Right ventricle myocardium inferior (tissue), 1 donor: ENCODE measurements at regions of chr10 and their contacts with region 1.

Region 1: DNA sequence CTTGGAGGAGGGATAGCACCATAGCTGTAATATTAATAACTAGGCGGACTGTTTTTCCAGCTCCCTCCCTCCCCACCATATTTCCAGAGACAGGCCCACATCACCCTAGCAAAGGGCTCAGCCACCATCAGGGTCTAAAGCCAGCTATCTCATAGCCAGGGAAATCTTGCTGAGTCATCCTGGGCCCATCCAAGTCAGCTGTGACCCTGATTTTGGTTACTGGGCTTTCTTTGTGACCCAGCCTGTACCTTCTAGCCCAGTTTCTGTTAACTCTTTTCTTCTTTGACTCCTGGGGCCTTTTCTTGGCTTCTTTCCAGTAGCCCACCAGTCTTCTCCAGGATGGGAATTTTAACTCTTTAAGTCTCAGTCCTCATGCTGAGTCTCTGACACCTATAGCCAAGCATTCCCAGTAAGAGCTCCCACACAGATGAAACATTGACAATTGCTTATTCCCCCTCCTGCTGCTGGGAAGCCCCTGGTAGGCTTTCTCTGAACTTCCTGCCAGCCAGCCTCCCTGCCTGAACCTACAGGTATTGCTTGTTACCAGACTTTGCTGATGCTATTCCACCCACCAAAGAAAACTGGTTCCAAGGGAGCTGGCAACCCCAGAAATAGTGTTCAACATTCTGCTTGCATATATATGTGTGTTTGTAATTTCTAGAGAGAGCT is 34.8 kb upstream of the ADO start:
- DNase-seq: no peak
- ATAC-seq: peak; percentile 49

Region 2: GRCh38 chr10:62632071-62632809 is 137.5 kb before region 1 on chr10:
- intact Hi-C with region 1: loop called (anchors 5 kb)
- DNase-seq: peak; percentile 74
- ATAC-seq: peak; percentile 85

Region 3: GRCh38 chr10:62732841-62733653 is 36.7 kb before region 1 on chr10:
- intact Hi-C with region 1: no loop called
- DNase-seq: no peak
- ATAC-seq: no peak